ENCODE measurements at regions of chr9 and their contacts with region 1.

Region 1: GRCh38 chr9:29322240-29322639 is 1749.0 kb upstream of the C9orf72 start:
- DNase-seq: no peak
- H3K4me3 ChIP-seq: no peak overlapping the region
- H3K27me3 ChIP-seq: no peaks in the 10 kb centered on the region
- CTCF ChIP-seq: no peak

Region 2: GRCh38 chr9:29730163-29730562 is 407.9 kb after region 1 on chr9:
- CTCF ChIA-PET with region 1: no interaction called
- POLR2A ChIA-PET with region 1: interaction called, 15 read pairs
- DNase-seq: no peak
- H3K4me3 ChIP-seq: no peak overlapping the region
- H3K27me3 ChIP-seq: no peaks in the 10 kb centered on the region
- CTCF ChIP-seq: no peak